ENCODE measurements at regions of chr2 and their contacts with region 1.

Region 1: GRCh38 chr2:233990261-233990798 is 60.2 kb upstream of the SPP2 start:
- DNase-seq: peak; percentile 91
- H3K4me3 Mint-ChIP-seq: peak overlapping the region; percentile 25
- H3K27ac Mint-ChIP-seq: peak overlapping the region; percentile 27
- H3K4me1 Mint-ChIP-seq: peaks cover 39% of the 10 kb centered on the region
- H3K27me3 Mint-ChIP-seq: peaks cover 18% of the 10 kb centered on the region

Region 2: DNA sequence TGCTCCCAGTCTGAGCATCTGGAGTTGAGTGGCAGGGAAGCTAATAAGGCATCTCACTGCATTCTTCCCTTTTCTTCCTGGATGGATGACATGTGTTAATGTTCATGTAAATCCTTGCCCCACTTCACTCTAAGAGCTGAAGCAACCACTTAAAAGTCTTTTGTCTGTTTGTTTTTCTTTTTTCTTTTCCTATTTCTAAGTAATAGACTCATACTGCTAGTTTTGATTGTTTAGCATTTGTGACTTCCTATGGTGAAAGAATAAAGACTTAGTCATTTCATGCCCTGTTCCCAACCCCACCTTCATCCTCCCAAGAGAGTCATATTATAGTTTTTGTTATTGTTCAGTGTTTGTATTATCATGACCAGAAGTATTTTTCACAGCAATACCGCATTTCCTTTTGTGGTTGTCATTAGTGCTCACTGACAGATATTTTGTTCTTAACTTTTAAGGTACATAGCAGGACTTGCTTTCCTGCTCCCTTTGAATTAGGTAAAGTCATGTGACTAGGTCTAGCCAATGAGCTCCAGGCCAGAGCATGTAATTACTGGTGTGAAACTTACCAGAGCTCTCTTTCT is 42.0 kb after region 1 on chr2:
- intact Hi-C with region 1: loop called (anchors 2 kb)
- DNase-seq: peak; percentile 79
- H3K4me3 Mint-ChIP-seq: peak overlapping the region; percentile 4
- H3K27ac Mint-ChIP-seq: peak overlapping the region; percentile 11
- H3K4me1 Mint-ChIP-seq: peaks cover 16% of the 10 kb centered on the region
- H3K27me3 Mint-ChIP-seq: peaks cover 28% of the 10 kb centered on the region

Measured in activated CD4-positive, alpha-beta T cell treated with anti-CD3 and anti-CD28 coated beads, Interleukin-2, amount 10 ng/mL, durations not matched to agents 24 days and 14 days (primary cell).